Activated T-helper 1 cell treated with anti-CD3 and anti-CD28 coated beads, Interleukin-12 subunit alpha, Interleukin-12 subunit beta, Interleukin-2, Interleukin-4 antibody, amounts not matched to agents 30 ng/mL and 10 ng/mL and 1 ng/mL, durations not matched to agents 14 hours and 24 hours and 36 hours (primary cell): ENCODE measurements at regions of chr19 and their contacts with region 1.

Region 1: DNA sequence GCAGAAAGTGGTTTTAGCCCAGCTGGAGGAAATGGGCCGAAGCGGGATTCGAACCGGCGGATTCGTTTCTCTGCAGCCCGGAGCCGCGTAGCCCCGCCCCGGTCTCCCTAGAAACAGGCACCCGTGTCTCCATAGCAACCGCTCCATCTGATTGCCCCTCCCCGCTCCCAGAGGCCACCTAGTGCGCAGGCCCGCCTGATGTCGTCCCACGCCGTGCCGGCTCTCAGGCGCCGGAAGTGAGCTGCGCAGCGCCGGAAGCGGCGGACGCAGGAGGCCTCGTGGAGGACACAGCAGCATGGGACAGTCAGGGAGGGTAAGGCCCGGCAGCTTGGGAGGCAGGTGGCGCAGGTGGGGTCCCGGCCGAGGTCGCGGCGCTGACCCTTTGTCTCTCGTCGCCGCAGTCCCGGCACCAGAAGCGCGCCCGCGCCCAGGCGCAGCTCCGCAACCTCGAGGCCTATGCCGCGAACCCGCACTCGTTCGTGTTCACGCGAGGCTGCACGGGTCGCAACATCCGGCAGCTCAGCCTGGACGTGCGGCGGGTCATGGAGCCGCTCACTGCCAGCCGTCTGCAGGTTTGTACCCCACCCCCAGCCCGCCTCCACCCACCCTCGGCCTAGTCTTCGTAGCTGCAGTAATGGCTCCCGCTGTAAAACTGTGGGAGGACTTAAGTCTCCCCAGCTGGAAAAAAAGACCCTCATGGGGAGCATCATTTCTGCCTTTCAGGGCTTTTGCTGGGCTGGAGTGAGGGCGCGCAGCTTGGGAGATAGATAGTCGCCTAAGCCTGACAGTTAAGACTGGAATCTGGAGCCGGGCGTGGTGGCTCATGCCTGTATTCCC is at the start of gene PPAN:
- DNase-seq: peak; percentile 97
- H3K4me3 Mint-ChIP-seq: peak within 1 kb of the TSS; percentile 97
- H3K27ac Mint-ChIP-seq: peak within 1 kb of the TSS; percentile 99
- H3K4me1 Mint-ChIP-seq: peaks cover 60% of the 10 kb centered on the region
- H3K27me3 Mint-ChIP-seq: peaks cover 1% of the 10 kb centered on the region
- total RNA-seq, gene PPAN: 234 and 250 TPM in 2 replicates

Region 2: DNA sequence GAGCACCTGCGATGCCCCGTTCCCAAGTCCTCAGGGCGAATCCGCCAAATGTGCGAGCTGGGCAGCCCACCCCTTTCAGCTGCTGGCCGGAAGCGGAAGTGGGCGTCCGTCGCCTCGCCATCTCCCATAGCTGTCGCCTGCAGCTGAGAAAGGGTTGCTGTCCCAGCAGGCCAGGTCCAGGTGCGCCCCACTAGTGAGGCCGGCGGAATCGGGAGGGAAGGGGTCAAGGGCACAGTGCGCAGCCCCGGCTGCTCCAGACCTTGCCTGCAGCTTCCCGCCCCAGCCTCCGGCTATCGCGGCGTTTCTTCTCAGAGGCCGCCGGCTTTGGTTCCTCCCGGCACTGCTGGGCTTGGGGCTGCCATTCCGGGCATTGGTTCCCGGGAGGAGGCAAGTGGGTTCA is 743.4 kb before region 1 on chr19 and contains the start of gene ZNF177:
- intact Hi-C with region 1: no loop called
- DNase-seq: no peak
- H3K4me3 Mint-ChIP-seq: no peak within 1 kb of the TSS
- H3K27ac Mint-ChIP-seq: no peak within 1 kb of the TSS
- H3K4me1 Mint-ChIP-seq: no peaks in the 10 kb centered on the region
- H3K27me3 Mint-ChIP-seq: no peaks in the 10 kb centered on the region
- total RNA-seq, gene ZNF177: 0.18 TPM in 1 of 2 replicates, not detected in the other

Region 3: GRCh38 chr19:9934132-9934950 is 172.0 kb before region 1 on chr19:
- intact Hi-C with region 1: loop called (anchors 2 kb)
- DNase-seq: peak; percentile 69
- H3K4me3 Mint-ChIP-seq: no peak overlapping the region
- H3K27ac Mint-ChIP-seq: no peak overlapping the region
- H3K4me1 Mint-ChIP-seq: peaks cover 26% of the 10 kb centered on the region
- H3K27me3 Mint-ChIP-seq: peaks cover 48% of the 10 kb centered on the region

Region 4: GRCh38 chr19:10079031-10079453 is 27.3 kb before region 1 on chr19:
- intact Hi-C with region 1: no loop called
- DNase-seq: no peak
- H3K4me3 Mint-ChIP-seq: no peak overlapping the region
- H3K27ac Mint-ChIP-seq: no peak overlapping the region
- H3K4me1 Mint-ChIP-seq: no peaks in the 10 kb centered on the region
- H3K27me3 Mint-ChIP-seq: peaks cover 18% of the 10 kb centered on the region

Region 5: GRCh38 chr19:10095948-10096621 is 10.2 kb before region 1 on chr19:
- intact Hi-C with region 1: loop called (anchors 1 kb)
- DNase-seq: peak; percentile 91
- H3K4me3 Mint-ChIP-seq: peak overlapping the region; percentile 49
- H3K27ac Mint-ChIP-seq: peak overlapping the region; percentile 79
- H3K4me1 Mint-ChIP-seq: peaks cover 21% of the 10 kb centered on the region
- H3K27me3 Mint-ChIP-seq: no peaks in the 10 kb centered on the region

Region 6: GRCh38 chr19:10155839-10156238 is 49.5 kb after region 1 on chr19:
- intact Hi-C with region 1: no loop called
- DNase-seq: no peak
- H3K4me3 Mint-ChIP-seq: no peak overlapping the region
- H3K27ac Mint-ChIP-seq: no peak overlapping the region
- H3K4me1 Mint-ChIP-seq: no peaks in the 10 kb centered on the region
- H3K27me3 Mint-ChIP-seq: no peaks in the 10 kb centered on the region

Region 7: DNA sequence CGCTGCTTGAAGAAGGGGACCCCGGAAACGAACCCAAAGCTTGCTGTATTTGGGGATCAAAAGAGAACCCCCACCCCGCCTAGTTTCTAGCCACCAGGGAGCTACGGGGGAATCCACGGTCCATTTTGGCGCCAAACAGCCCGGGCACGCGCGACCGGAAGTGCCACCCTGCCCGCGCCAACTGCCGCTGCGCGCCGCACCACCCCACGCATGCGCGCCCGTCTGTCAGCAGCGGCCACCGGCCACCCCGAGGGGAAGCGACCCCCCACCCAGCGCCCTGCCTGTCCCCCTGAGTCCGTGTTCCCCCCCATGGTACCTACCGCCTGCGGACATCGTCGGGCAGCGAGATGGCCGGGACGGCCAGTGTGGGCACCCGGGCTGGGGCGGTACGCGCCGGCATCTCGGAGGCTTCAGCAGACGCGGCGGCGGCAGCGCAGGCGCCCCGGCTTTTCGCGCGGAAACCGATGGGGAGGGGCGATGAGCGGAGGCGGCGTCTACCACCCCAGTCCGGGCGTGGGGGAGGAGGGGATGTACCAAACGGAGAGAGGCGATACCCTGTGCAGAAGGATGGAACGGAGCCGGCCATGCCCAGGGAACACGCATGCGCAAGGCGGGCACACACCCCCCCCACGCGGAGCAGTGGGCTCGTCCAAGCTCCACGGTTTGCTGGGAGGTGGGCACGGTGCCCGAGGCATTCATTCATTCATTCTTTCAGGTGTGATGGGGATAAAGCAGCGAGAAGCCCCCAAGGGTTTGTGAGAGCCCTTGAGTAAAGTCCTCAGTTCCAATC is 88.4 kb after region 1 on chr19 and contains the start of gene DNMT1:
- intact Hi-C with region 1: loop called (anchors 2 kb)
- DNase-seq: peak; percentile 97
- H3K4me3 Mint-ChIP-seq: peak within 1 kb of the TSS; percentile 97
- H3K27ac Mint-ChIP-seq: peak within 1 kb of the TSS; percentile 97
- H3K4me1 Mint-ChIP-seq: peaks cover 16% of the 10 kb centered on the region
- H3K27me3 Mint-ChIP-seq: no peaks in the 10 kb centered on the region
- total RNA-seq, gene DNMT1: 411 and 425 TPM in 2 replicates

Region 8: DNA sequence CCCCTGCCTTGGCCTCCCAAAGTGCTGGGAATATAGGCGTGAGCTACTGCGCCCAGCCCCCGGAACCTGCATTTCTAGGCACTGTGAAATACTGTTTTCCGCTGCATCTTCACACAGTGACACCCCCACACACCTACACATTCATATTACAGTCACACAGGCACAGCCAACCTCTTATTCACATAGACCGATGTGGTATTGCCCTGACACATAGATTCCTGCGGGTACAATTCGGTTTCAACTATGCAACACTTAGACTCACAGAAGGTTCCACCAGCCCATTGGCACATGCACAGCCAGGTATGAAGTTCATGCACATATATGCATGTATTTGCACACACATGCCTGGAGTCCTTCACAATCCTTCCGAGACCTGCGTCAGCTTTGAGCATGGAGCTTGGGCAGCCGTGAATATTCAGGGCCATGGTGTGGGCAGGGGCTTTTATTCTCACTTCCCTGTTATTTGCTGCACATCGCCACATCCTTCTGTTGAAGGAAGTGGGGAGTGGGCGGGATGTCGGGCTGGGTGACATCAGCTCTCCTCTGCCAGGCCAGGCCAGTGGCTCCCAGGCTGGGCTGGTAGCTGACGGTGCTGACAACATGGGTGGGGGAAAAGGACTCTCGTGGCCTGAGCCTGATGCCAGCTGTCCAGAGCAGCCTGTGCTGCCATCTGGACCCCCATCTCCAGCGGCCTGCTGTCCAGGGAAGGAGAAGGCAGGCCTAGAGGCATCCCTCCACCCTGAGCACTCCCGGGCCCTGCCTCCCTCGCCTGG is 302.4 kb after region 1 on chr19:
- intact Hi-C with region 1: loop called (anchors 2 kb)
- DNase-seq: peak; percentile 70
- H3K4me3 Mint-ChIP-seq: peak overlapping the region; percentile 75
- H3K27ac Mint-ChIP-seq: peak overlapping the region; percentile 95
- H3K4me1 Mint-ChIP-seq: peaks cover 76% of the 10 kb centered on the region
- H3K27me3 Mint-ChIP-seq: no peaks in the 10 kb centered on the region

Region 9: GRCh38 chr19:10593820-10594637 is 487.7 kb after region 1 on chr19:
- intact Hi-C with region 1: no loop called
- DNase-seq: no peak
- H3K4me3 Mint-ChIP-seq: no peak overlapping the region
- H3K27ac Mint-ChIP-seq: peak overlapping the region; percentile 37
- H3K4me1 Mint-ChIP-seq: peaks cover 17% of the 10 kb centered on the region
- H3K27me3 Mint-ChIP-seq: no peaks in the 10 kb centered on the region